Spleen (tissue), 13 donors: ENCODE measurements at regions of chr13 and their contacts with region 1.

Region 1: DNA sequence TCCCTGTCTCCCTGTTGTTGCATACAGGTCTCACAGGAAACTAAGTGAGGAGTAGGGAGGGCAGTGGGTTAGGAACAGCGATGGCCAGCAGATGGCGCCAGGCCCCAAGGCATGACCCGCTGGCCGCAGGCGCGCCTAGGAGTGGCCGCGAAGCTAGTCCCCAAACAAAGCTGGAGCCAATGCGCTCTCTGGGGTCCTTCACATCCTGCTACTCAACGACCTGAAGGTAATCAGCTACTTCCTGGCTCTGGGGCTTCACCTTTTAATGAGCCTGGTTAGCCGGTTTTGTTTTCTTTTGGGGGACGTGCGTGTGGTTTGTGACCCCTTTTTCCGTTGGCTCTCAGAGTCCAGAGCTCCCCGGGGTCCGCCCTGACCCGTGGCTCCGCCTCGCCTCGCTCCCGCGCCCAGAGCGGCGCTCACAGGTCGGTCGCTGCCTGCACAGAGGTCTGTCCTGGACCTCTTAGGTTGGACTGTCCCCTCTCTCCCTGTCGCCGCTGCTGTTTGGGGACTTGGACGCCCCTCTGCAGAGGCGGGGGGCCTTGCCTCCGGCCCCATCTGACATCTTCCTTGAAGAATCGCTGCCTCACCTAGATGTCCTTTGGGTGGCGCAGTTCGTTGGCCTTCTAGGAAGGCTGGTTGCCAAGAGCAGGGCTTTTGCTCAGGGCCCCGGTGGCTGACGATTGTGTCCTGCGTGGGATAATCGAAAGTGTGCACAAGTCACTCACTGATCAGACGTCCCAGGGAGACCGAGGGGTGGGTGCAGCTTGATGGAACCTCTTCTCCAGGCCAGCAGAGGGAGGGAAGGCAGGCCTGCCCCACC is 62.1 kb upstream of the GTF3A start:
- DNase-seq: peak; percentile 95
- H3K4me3 ChIP-seq: peak overlapping the region in 7 of 8 donors; percentile 0 to 65 (median 27)
- H3K27ac ChIP-seq: no peak overlapping the region
- H3K4me1 ChIP-seq: peaks cover 0 to 22% (median 9%) of the 10 kb centered on the region in 6 donors
- H3K27me3 ChIP-seq: peaks cover 0 to 55% (median 4%) of the 10 kb centered on the region in 7 donors
- CTCF ChIP-seq: peak; percentile 75 to 96 (median 91)
- POLR2A ChIP-seq: no peak

Region 2: DNA sequence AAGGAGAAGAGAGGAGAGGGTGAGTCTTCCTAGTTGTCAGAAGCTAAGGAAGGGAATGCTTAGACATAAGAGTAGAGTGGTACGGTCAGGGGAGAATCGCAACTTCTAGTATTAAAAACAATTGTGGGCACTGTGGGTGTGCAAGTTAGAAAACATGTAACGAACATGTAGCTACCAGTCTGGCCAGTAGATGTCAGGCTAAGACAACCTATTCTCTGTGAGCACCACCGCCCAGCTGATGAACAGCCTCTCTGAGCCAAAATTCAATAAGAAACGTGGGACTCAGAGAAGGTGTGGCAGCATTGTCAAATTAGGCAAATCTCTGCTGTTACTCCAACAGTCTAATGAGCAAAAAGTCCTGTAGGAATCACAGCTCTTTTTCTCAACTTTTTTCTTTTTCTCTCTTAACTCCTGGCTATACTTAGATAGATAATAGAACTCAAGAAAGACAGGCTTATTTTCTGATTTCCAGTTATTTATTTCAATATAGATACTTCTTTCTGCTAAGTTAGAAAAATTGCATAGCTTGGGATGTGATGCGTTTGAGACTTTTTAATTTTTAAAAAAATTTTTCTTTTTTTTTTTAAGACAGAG is 376.9 kb before region 1 on chr13:
- intact Hi-C with region 1: loop called (anchors 2 kb)
- DNase-seq: no peak
- H3K4me3 ChIP-seq: no peak overlapping the region
- H3K27ac ChIP-seq: no peak overlapping the region
- H3K4me1 ChIP-seq: peaks cover 0 to 26% (median 4%) of the 10 kb centered on the region in 6 donors
- H3K27me3 ChIP-seq: peaks cover 0 to 16% (median 0%) of the 10 kb centered on the region in 7 donors
- CTCF ChIP-seq: peak; percentile 57 to 93 (median 82)
- POLR2A ChIP-seq: no peak

Region 3: GRCh38 chr13:27980280-27980998 is 618.2 kb after region 1 on chr13:
- intact Hi-C with region 1: loop called (anchors 5 kb)
- DNase-seq: no peak
- H3K4me3 ChIP-seq: peak overlapping the region in 4 of 8 donors; percentile 5 to 54 (median 11)
- H3K27ac ChIP-seq: no peak overlapping the region
- H3K4me1 ChIP-seq: peaks cover 18 to 60% (median 41%) of the 10 kb centered on the region in 6 donors
- H3K27me3 ChIP-seq: peaks cover 0 to 98% (median 88%) of the 10 kb centered on the region in 7 donors
- CTCF ChIP-seq: no peak
- POLR2A ChIP-seq: no peak